ENCODE measurements at regions of chr1 and their contacts with region 1.

Region 1: GRCh38 chr1:234722904-234723720 is 113.1 kb upstream of the IRF2BP2 start:
- DNase-seq: peak in 1 of 2 experiments; percentile 90
- H3K4me3 ChIP-seq: peak overlapping the region; percentile 53
- H3K27ac ChIP-seq: peak overlapping the region; percentile 97
- H3K4me1 ChIP-seq: peaks cover 71% of the 10 kb centered on the region
- H3K27me3 ChIP-seq: no peaks in the 10 kb centered on the region
- CTCF ChIP-seq: no peak

Region 2: GRCh38 chr1:234638832-234639799 is 84.0 kb before region 1 on chr1:
- CTCF ChIA-PET with region 1: no interaction called
- POLR2A ChIA-PET with region 1: no interaction called
- intact Hi-C with region 1: no loop called
- DNase-seq: peak in 1 of 2 experiments; percentile 92
- H3K4me3 ChIP-seq: no peak overlapping the region
- H3K27ac ChIP-seq: peak overlapping the region; percentile 48
- H3K4me1 ChIP-seq: peaks cover 25% of the 10 kb centered on the region
- H3K27me3 ChIP-seq: no peaks in the 10 kb centered on the region
- CTCF ChIP-seq: no peak

Region 3: GRCh38 chr1:234683861-234684632 is 39.1 kb before region 1 on chr1:
- CTCF ChIA-PET with region 1: no interaction called
- POLR2A ChIA-PET with region 1: interaction called, 6 read pairs
- intact Hi-C with region 1: loop called (anchors 1 kb)
- DNase-seq: peak; percentile 56 to 82
- H3K4me3 ChIP-seq: 0 out of 2 replicates have a peak overlapping the region, but pooled peaks have one; percentile 3
- H3K27ac ChIP-seq: peak overlapping the region; percentile 10
- H3K4me1 ChIP-seq: peaks cover 17% of the 10 kb centered on the region
- H3K27me3 ChIP-seq: no peaks in the 10 kb centered on the region
- CTCF ChIP-seq: no peak

Region 4: GRCh38 chr1:234875953-234876855 is 153.1 kb after region 1 on chr1:
- CTCF ChIA-PET with region 1: interaction called, 6 read pairs
- POLR2A ChIA-PET with region 1: no interaction called
- intact Hi-C with region 1: loop called (anchors 1 kb)
- DNase-seq: peak; percentile 70 to 98
- H3K4me3 ChIP-seq: peak overlapping the region; percentile 45; the same call in 1 of the 2 replicates
- H3K27ac ChIP-seq: peak overlapping the region; percentile 99
- H3K4me1 ChIP-seq: peaks cover 70% of the 10 kb centered on the region
- H3K27me3 ChIP-seq: no peaks in the 10 kb centered on the region
- CTCF ChIP-seq: no peak

Region 5: DNA sequence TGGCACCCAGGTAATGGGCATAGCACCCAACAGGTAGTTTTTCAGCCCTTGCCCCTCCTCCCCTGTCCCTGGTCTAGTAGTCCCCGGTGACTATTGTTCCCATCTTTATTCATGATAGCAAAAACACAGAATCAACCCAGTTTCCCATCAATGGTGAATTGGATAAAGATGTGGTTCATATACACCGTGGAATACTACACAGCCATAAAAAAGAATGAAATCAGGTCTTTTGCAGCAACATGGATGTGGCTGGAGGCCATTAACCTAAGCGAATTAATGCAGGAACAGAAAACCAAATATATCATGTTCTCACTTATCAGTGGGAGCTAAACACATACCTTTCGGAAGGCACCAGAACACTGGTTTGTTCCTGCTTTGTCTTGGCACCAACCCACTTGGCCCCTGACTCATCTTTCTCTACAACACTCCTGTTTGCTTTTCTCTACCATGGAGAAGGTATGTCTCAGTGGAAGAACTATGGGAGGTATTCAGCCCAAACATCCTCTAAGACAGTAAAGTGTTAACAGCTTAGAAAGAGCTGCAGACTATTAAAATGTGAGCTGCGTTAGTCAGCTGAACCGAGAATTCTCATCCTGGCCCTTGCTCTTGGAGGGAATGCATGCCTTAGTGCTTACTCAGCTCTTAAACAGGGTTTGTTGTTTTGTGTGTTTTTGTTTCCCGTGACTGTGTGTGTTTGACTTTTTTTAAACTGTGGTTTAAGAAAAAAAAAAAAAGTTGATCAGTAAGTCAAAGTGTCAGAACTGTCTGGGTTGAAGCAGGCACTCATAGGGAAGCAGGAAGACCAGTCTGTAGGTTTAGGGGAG is 202.5 kb after region 1 on chr1:
- CTCF ChIA-PET with region 1: no interaction called
- POLR2A ChIA-PET with region 1: interaction called, 6 read pairs
- intact Hi-C with region 1: loop called (anchors 1 kb)
- DNase-seq: peak; percentile 74 to 99
- H3K4me3 ChIP-seq: no peak overlapping the region
- H3K27ac ChIP-seq: peak overlapping the region; percentile 88
- H3K4me1 ChIP-seq: peaks cover 37% of the 10 kb centered on the region
- H3K27me3 ChIP-seq: no peaks in the 10 kb centered on the region
- CTCF ChIP-seq: no peak

Region 6: DNA sequence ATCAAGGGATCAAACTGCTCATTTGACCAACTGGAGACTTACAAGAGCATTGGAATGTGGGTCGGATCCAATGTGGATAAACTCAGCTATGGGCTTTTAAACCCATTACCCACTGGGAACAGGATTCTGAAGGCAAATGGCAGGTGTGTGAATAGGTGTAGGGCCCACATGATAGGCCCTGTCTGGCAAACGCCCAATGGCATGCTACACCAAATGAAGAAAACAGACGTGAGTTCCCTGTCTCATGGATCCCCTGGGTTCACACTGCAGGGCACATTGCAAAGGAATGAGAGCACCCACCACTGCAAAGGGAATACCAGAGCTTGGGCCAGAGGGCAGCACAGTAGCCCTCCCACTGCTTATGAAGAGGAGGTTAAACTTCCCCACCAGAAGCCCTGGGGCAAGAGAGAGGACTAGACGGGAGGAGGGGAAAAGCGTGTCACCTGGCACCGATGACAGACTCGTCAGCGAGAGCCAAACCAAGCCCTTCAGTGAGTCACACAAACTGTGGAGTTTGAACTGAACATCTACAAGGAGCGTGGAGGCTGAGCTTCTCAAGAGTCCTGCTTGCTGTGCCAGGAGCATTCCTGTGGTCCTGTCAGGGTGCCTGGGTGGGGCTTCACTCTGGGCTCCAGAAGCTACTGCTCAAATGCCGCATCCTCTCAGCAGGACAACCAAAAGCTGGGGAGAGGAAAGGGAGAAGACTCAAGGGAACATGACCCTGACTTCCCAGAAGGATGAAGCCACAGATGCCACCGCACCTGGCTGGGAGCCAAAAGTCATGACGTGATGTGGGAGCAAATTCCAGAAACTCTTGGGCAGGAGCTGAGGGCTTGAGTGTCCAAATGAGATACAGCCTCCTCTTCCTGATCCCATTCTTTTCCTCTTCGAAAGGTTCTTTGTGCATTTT is 344.4 kb after region 1 on chr1:
- CTCF ChIA-PET with region 1: no interaction called
- POLR2A ChIA-PET with region 1: no interaction called
- intact Hi-C with region 1: loop called (anchors 1 kb)
- DNase-seq: peak; percentile 98 to 100
- H3K4me3 ChIP-seq: peak overlapping the region; percentile 39; the same call in 1 of the 2 replicates
- H3K27ac ChIP-seq: peak overlapping the region; percentile 100
- H3K4me1 ChIP-seq: peaks cover 68% of the 10 kb centered on the region
- H3K27me3 ChIP-seq: no peaks in the 10 kb centered on the region
- CTCF ChIP-seq: no peak